ENCODE measurements at regions of chr15 and their contacts with region 1.

Region 1: DNA sequence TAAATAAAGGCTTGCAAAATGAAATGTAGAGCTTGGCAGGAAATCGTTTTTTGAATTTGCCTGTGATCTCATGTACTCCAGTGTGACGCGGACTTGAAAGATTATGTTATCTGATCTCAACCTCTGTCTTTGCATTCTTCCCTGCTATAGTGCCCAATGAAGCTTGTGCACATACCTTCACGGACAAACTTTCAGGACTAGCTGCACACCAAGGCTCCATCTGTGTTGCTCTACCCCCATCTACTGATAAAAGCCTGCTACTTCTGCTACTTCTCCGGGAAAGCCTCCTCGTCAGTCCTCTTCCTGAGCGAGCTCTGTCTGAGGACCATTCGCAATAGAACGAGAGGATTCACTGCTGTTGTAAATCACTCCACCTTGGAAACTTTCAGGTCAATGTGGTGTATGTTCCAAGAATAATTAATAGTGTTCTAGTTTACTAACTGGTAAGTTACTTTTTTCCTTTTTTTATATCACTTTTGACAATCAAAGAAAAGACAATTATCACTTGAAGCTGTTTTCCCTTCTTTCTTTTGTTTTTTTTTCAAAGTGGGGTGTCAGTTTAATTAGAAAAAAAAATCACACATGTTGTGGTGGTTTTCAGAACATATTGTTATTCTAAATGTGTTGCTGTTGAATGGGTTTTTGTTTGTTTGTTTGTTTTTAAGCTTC is 217.6 kb downstream of the ARRDC4 start:
- DNase-seq: peak in 8 of 9 donors; percentile 11 to 46 (median 38)
- ATAC-seq: peak; percentile 74
- H3K4me3 ChIP-seq: no peak overlapping the region
- H3K4me3 Mint-ChIP-seq: peak overlapping the region in 4 of 10 donors; percentile 3 to 67 (median 4)
- H3K27ac ChIP-seq: no peak overlapping the region
- H3K27ac Mint-ChIP-seq: no peak overlapping the region
- H3K4me1 ChIP-seq: no peaks in the 10 kb centered on the region
- H3K4me1 Mint-ChIP-seq: peaks cover 4 to 13% (median 11%) of the 10 kb centered on the region in 7 donors
- H3K27me3 ChIP-seq: no peaks in the 10 kb centered on the region
- H3K27me3 Mint-ChIP-seq: peaks cover 39 to 53% (median 48%) of the 10 kb centered on the region in 5 donors

Region 2: DNA sequence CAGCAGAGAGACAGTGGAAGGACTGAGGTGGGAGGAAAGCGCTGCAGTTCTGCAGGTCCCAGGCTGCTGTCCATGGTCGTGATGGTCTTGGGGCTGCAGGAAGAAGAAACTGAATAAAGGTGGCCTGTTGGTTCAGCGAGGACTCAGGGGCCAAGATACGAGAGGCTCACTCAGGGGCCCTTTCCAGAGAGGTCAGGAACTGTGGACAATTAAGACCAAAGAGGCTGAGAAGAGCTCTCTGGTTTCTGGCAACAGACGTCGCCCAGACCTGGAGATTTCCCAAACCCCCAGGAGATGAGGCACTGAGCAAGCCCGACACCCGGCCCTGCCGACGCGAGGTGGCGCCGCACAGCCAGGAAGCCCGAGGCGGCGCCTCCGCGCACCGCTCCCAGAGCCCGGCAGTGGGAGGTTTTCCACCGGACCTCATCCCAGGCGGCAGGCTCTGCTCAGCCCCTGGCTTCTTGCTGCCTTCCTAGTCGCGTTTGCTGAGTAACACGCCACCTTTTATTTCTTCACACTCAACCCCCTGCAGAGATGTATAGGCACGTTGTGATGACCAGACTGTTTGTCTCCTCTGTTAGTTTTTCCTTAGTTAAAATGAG is 274.0 kb before region 1 on chr15:
- CTCF ChIA-PET with region 1: interaction called, 10 read pairs
- POLR2A ChIA-PET with region 1: no interaction called
- intact Hi-C with region 1: loop called (anchors 1 kb)
- DNase-seq: peak in 3 of 9 donors; percentile 2 to 41 (median 7)
- ATAC-seq: peak; percentile 40
- H3K4me3 ChIP-seq: no peak overlapping the region
- H3K4me3 Mint-ChIP-seq: no peak overlapping the region
- H3K27ac ChIP-seq: no peak overlapping the region
- H3K27ac Mint-ChIP-seq: no peak overlapping the region
- H3K4me1 ChIP-seq: no peaks in the 10 kb centered on the region
- H3K4me1 Mint-ChIP-seq: peaks cover 0 to 5% (median 3%) of the 10 kb centered on the region in 7 donors
- H3K27me3 ChIP-seq: no peaks in the 10 kb centered on the region
- H3K27me3 Mint-ChIP-seq: peaks cover 26 to 55% (median 42%) of the 10 kb centered on the region in 5 donors

Region 3: DNA sequence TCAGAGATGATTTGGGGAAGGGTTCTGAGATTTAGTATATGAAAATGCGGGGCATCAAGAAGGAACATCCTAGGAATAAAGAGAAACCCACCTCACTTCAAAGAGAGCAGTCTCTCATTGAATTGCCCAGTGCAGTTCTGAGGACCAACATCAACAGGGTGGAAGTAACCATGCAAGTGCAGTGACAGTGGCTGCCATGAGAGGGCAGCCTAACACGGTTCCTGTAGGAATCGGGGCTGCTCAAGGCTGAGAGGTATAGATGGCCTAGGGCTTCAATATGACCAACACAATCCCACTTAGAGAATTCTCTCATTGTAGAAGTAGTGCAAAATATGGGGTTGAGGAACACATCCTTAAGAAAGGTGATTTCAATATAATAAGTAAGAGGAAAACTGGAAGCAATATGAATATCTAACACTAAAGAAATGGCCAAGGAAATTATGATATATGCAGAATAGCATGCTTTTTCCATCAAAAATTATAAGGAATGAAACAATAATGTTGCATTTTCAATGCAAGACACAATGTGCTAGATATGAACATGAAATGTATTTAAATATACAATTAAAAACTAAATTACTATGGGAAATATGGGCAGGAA is 268.7 kb before region 1 on chr15:
- CTCF ChIA-PET with region 1: interaction called, 10 read pairs
- POLR2A ChIA-PET with region 1: no interaction called
- intact Hi-C with region 1: loop called (anchors 1 kb)
- DNase-seq: peak; percentile 9 to 66 (median 47)
- ATAC-seq: peak; percentile 86
- H3K4me3 ChIP-seq: no peak overlapping the region
- H3K4me3 Mint-ChIP-seq: no peak overlapping the region
- H3K27ac ChIP-seq: no peak overlapping the region
- H3K27ac Mint-ChIP-seq: no peak overlapping the region
- H3K4me1 ChIP-seq: no peaks in the 10 kb centered on the region
- H3K4me1 Mint-ChIP-seq: peaks cover 0 to 2% (median 1%) of the 10 kb centered on the region in 7 donors
- H3K27me3 ChIP-seq: peaks cover 0 to 3% of the 10 kb centered on the region in 2 donors
- H3K27me3 Mint-ChIP-seq: peaks cover 10 to 35% (median 21%) of the 10 kb centered on the region in 5 donors

Region 4: DNA sequence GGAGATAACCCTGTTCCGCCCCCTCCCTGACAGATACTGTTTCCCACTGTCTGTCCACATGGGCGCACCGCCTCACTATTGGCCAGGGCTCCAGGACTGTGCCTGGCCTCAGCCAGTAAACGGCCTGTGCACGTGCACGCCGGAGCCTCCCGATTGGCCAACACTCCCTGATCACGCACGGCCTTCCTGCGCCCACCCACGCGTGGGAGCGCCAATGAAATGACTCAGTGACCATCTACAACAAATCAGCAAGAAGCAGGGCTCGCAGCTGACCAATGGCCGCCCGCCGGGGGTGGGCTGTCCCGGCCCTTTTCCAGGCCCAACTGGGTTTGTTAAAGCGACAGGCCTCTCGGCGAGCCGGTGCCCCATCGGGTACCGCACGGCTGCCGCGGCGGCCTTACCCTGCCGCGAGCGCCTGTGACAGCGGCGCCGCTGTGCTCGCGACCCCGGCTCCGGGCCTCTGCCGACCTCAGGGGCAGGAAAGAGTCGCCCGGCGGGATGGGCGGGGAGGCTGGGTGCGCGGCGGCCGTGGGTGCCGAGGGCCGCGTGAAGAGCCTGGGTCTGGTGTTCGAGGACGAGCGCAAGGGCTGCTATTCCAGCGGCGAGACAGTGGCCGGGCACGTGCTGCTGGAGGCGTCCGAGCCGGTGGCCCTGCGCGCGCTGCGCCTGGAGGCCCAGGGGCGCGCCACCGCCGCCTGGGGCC is 217.5 kb before region 1 on chr15 and contains the start of gene ARRDC4:
- CTCF ChIA-PET with region 1: no interaction called
- POLR2A ChIA-PET with region 1: no interaction called
- intact Hi-C with region 1: loop called in 1 of 2 experiments (anchors 1 kb)
- DNase-seq: peak; percentile 85 to 100 (median 100)
- ATAC-seq: peak; percentile 97
- H3K4me3 ChIP-seq: peak within 1 kb of the TSS; percentile 45
- H3K4me3 Mint-ChIP-seq: peak within 1 kb of the TSS; percentile 78 to 93 (median 86)
- H3K27ac ChIP-seq: peak within 1 kb of the TSS; percentile 79
- H3K27ac Mint-ChIP-seq: peak within 1 kb of the TSS; percentile 71 to 98 (median 88)
- H3K4me1 ChIP-seq: peaks cover 0 to 13% of the 10 kb centered on the region in 2 donors
- H3K4me1 Mint-ChIP-seq: peaks cover 14 to 41% (median 21%) of the 10 kb centered on the region in 7 donors
- H3K27me3 ChIP-seq: no peaks in the 10 kb centered on the region
- H3K27me3 Mint-ChIP-seq: peaks cover 0 to 40% (median 0%) of the 10 kb centered on the region in 5 donors
- total RNA-seq, gene ARRDC4: 0.59 to 6.8 (median 1.1) TPM

Region 5: GRCh38 chr15:98085003-98085639 is 92.9 kb before region 1 on chr15:
- CTCF ChIA-PET with region 1: interaction called, 4 read pairs
- POLR2A ChIA-PET with region 1: no interaction called
- intact Hi-C with region 1: loop called (anchors 1 kb)
- DNase-seq: peak in 7 of 9 donors; percentile 3 to 51 (median 36)
- ATAC-seq: no peak
- H3K4me3 ChIP-seq: no peak overlapping the region
- H3K4me3 Mint-ChIP-seq: no peak overlapping the region
- H3K27ac ChIP-seq: no peak overlapping the region
- H3K27ac Mint-ChIP-seq: no peak overlapping the region
- H3K4me1 ChIP-seq: no peaks in the 10 kb centered on the region
- H3K4me1 Mint-ChIP-seq: no peaks in the 10 kb centered on the region
- H3K27me3 ChIP-seq: no peaks in the 10 kb centered on the region
- H3K27me3 Mint-ChIP-seq: no peaks in the 10 kb centered on the region

Region 6: GRCh38 chr15:98196371-98196770 is 18.3 kb after region 1 on chr15:
- CTCF ChIA-PET with region 1: no interaction called
- POLR2A ChIA-PET with region 1: no interaction called
- intact Hi-C with region 1: no loop called
- DNase-seq: no peak
- ATAC-seq: no peak
- H3K4me3 ChIP-seq: no peak overlapping the region
- H3K4me3 Mint-ChIP-seq: no peak overlapping the region
- H3K27ac ChIP-seq: no peak overlapping the region
- H3K27ac Mint-ChIP-seq: no peak overlapping the region
- H3K4me1 ChIP-seq: no peaks in the 10 kb centered on the region
- H3K4me1 Mint-ChIP-seq: no peaks in the 10 kb centered on the region
- H3K27me3 ChIP-seq: no peaks in the 10 kb centered on the region
- H3K27me3 Mint-ChIP-seq: peaks cover 2 to 49% (median 26%) of the 10 kb centered on the region in 5 donors

Measured in naive thymus-derived CD4-positive, alpha-beta T cell (primary cell).